PC-3 (cell line): ENCODE measurements at regions of chr2 and their contacts with region 1.

Region 1: DNA sequence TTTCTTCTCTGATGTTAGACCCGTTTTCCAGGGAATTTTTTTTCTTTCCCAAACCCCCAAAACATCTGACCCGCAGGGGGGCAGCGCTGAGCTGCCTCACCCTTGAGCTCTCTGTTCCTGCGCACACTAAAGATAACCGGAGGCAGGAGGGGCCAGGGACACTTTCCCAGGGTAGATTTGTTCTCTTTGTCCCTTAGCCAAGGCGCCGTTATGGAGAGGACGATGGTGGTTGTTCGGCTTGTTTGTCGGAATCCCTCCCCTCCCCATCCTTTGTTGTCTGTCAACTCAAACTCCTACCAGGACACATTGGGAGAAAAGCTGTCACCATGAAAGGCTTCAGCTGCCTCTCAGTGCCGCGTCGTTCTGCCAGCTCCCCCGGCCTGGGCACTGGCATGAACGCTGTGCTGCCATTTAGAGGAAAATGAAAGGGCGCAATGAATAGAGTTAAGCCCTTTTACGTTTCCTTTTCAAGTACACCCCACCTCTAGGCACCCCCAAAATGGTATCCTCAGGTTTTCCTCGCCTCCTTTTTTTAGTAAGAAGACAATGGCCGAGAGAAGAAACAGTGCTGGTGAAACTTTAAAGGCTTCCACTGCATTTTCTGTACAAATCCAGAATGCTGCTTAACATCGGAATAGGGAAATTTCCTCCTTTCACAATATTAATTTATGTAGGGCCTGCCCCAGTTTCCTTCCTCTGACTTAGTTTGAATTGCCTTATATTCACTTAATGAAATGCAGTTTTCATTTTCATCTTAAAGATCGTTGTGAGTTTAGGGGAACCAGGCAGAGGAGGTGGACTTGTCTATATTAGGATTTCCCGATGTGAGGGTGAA is 62.1 kb downstream of the RND3 start:
- DNase-seq: no peak
- ATAC-seq: no peak
- H3K4me3 ChIP-seq: no peak overlapping the region
- H3K27ac ChIP-seq: no peak overlapping the region
- H3K4me1 ChIP-seq: peaks cover 9% of the 10 kb centered on the region; the same call in 1 of the 2 replicates
- H3K27me3 ChIP-seq: no peaks in the 10 kb centered on the region
- CTCF ChIP-seq: 0 out of 2 replicates have a peak, but pooled peaks have one; percentile 9

Region 2: DNA sequence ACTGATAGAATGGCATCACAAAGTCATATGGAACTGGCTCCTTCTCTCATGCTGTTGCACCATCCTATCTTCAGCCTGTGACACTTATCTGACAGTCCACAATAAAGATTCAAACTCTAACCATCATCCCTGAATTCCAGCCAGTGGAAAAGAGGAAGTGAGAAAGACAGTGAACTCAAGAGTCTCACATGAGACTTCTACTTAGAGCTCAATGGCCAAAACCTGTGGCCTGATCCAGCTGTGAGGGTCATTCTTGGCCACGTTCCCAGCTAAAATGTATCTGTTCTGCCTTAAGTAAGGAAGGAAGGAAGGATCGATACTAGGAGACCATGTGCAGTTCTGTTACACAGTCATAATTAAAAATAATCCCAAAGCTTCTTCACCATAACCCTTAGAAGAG is 11.4 kb before region 1 on chr2:
- CTCF ChIA-PET with region 1: no interaction called
- POLR2A ChIA-PET with region 1: interaction called, 16 read pairs
- intact Hi-C with region 1: no loop called
- DNase-seq: no peak
- ATAC-seq: no peak
- H3K4me3 ChIP-seq: no peak overlapping the region
- H3K27ac ChIP-seq: no peak overlapping the region
- H3K4me1 ChIP-seq: no peaks in the 10 kb centered on the region; the same call in 1 of the 2 replicates
- H3K27me3 ChIP-seq: no peaks in the 10 kb centered on the region
- CTCF ChIP-seq: no peak